Natural killer cell (primary cell): ENCODE measurements at regions of chr1 and their contacts with region 1.

Region 1: GRCh38 chr1:59879574-59879973 is 47.0 kb downstream of the CYP2J2 start:
- DNase-seq: peak in 1 of 2 donors; percentile 75
- ATAC-seq: peak in 2 of 3 donors; percentile 44 to 48
- H3K4me3 ChIP-seq: no peak overlapping the region
- H3K4me3 Mint-ChIP-seq: no peak overlapping the region
- H3K27ac ChIP-seq: no peak overlapping the region
- H3K27ac Mint-ChIP-seq: no peak overlapping the region
- H3K4me1 ChIP-seq: no peaks in the 10 kb centered on the region
- H3K4me1 Mint-ChIP-seq: no peaks in the 10 kb centered on the region
- H3K27me3 ChIP-seq: no peaks in the 10 kb centered on the region
- H3K27me3 Mint-ChIP-seq: peaks cover 11 to 14% of the 10 kb centered on the region in 2 donors
- CTCF ChIP-seq: no peak

Region 2: DNA sequence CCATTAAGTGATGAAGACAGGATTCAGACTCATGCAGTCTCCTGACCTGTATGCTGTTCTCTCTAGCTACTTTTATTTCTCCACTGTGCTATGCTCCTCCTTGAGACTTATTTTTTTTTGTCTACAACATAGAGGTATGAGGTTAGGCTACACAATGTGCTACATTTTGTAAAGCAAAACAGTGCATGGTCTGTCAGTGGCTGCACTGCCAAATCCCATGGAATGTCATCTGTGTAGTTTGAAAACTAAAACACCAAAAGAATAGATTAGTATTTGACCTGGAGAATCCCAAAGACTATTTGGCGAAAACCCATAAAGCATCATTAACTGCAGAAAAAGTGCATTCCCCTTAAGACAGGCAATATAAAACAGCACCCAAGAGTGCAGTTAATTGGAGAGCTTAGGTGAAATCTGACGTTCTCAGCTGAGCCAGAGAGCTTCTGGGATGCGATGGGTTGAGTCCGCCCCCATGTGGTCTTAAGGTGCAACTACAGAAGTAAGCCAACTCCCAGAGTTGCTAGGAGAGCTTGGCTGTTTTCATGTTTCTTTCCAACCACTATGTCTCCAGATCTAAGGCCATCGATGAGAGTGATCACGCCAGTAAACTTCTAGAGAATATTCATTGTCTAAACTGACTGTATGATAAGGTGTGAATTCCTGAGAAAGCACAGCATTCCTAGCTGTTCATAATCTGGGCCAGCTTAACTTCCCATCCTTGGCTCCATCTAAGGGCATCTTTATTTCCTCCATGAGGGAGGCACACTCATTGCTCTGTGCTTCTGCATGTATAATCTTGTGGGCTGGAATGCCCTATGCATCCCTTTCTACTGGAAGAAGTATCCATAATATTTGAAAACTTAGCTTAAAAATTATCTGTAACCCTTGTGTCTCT is 67.7 kb after region 1 on chr1:
- intact Hi-C with region 1: loop called (anchors 2 kb)
- DNase-seq: peak in 1 of 2 donors; percentile 79
- ATAC-seq: peak; percentile 62 to 94 (median 75)
- H3K4me3 ChIP-seq: no peak overlapping the region
- H3K4me3 Mint-ChIP-seq: no peak overlapping the region
- H3K27ac ChIP-seq: no peak overlapping the region
- H3K27ac Mint-ChIP-seq: no peak overlapping the region
- H3K4me1 ChIP-seq: no peaks in the 10 kb centered on the region
- H3K4me1 Mint-ChIP-seq: no peaks in the 10 kb centered on the region
- H3K27me3 ChIP-seq: peaks cover 4% of the 10 kb centered on the region
- H3K27me3 Mint-ChIP-seq: peaks cover 13 to 17% of the 10 kb centered on the region in 2 donors
- CTCF ChIP-seq: peak; percentile 78